Activated CD8-positive, alpha-beta T cell treated with anti-CD3 and anti-CD28 coated beads for 36 hours (primary cell): ENCODE measurements at regions of chr1 and their contacts with region 1.

Region 1: DNA sequence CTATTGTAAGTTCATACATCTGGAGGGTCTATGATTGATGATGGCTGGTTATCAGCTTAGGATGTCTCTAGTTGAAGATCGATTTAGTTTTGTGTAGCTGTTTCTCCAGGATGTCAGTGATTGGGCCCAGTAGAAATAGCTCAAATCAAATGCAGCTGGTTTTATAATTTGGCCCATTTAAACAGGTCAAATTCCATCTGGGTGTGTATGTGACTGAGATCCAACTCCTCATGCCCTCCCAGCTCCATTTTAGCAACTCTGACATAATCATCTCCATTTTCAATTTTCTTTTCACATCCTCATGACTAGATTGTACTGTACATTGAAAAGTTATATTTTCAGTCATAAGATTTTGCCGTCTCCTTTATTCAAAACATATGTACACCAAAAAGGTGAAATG is 99.2 kb downstream of the TPR start:
- DNase-seq: no peak
- ATAC-seq: no peak
- H3K4me3 Mint-ChIP-seq: no peak overlapping the region
- H3K27ac Mint-ChIP-seq: no peak overlapping the region
- H3K4me1 Mint-ChIP-seq: no peaks in the 10 kb centered on the region
- H3K27me3 Mint-ChIP-seq: no peaks in the 10 kb centered on the region
- CTCF ChIP-seq: no peak

Region 2: DNA sequence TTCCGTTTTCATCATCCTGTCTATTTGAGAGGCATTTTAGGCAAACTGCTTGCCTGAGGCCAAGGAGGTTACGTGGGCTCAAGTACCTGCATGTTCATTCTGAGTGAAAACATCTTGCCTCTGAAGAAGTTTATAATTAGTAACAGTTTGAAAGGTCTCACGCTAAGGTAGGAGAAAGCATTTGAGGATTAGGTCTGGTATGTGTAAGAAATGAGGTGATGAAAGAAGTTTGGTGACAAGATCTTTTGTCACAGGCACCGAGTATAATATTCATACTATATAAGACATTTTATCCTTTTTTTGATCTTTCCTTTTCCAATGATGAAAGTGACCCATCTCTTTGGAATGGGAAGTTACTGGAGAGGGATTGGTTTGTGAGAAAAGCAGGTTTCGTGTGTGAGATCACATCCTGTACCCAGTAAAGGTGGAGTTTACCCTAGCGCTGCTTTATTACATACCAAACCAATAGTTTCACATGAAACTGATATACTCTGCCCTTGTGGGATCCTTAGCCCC is 283.8 kb after region 1 on chr1:
- CTCF ChIA-PET with region 1: no interaction called
- POLR2A ChIA-PET with region 1: no interaction called
- intact Hi-C with region 1: loop called (anchors 5 kb)
- DNase-seq: no peak
- ATAC-seq: no peak
- H3K4me3 Mint-ChIP-seq: no peak overlapping the region
- H3K27ac Mint-ChIP-seq: no peak overlapping the region
- H3K4me1 Mint-ChIP-seq: no peaks in the 10 kb centered on the region
- H3K27me3 Mint-ChIP-seq: peaks cover 4% of the 10 kb centered on the region
- CTCF ChIP-seq: no peak